Common myeloid progenitor, CD34-positive (primary cell): ENCODE measurements at regions of chr10 and their contacts with region 1.

Region 1: GRCh38 chr10:103678178-103678526 is 177.2 kb downstream of the SH3PXD2A start:
- DNase-seq: peak; percentile 93 to 98 (median 95)
- H3K4me3 ChIP-seq: peak overlapping the region in 4 of 7 experiments; percentile 22 to 65 (median 40)
- H3K27ac ChIP-seq: peak overlapping the region in 1 of 2 experiments; percentile 21
- H3K4me1 ChIP-seq: peaks cover 4 to 17% (median 10%) of the 10 kb centered on the region in 4 experiments
- H3K27me3 ChIP-seq: no peaks in the 10 kb centered on the region

Region 2: DNA sequence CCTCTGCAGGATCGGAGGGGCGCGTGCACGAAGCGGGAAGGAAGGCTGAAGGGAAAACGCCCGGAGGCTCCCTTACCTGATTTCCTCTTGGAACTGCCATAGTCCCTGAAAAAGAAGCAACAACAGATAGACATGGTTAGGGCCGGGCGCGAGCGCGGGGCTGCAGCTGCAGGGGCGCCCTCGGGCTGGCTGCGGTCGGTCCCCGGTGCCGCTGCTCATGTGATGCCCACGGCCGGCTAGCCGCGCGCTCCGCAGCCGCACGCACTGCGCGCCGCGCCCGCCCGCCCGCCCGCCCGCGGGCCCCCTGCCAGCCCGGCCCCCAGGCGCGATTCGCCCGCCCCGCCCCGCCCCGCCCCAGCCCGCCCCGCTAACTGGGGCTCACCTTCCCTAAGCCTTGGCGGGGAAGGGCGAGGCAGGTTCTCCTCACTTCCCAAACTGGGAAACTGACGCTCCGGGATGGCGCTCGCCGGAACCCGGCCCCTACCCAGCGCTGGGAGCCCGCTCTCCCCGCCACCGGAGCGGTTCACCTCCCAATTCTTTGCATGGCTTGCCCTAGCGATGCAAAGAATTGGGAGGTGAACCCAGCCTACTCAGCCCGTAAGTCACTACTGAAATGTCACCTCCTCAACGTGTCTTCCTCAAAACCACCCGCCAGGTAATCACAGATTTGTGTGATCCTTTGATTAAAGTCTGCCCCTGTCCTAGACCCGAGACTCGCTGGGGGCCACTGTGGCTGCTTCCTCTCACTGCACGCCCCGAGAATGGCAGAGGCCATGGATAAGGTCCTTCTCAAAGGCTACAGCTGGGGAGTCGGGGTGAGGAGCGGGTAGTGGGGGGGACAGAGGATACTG is 15.0 kb after region 1 on chr10:
- CTCF ChIA-PET with region 1: interaction called, 14 read pairs
- POLR2A ChIA-PET with region 1: no interaction called
- DNase-seq: peak; percentile 49 to 82 (median 79)
- H3K4me3 ChIP-seq: peak overlapping the region in 6 of 7 experiments; percentile 25 to 72 (median 50)
- H3K27ac ChIP-seq: no peak overlapping the region
- H3K4me1 ChIP-seq: peaks cover 0 to 35% (median 28%) of the 10 kb centered on the region in 4 experiments
- H3K27me3 ChIP-seq: peaks cover 0 to 33% (median 12%) of the 10 kb centered on the region in 5 experiments

Region 3: GRCh38 chr10:103870516-103870915 is 192.4 kb after region 1 on chr10:
- CTCF ChIA-PET with region 1: no interaction called
- POLR2A ChIA-PET with region 1: no interaction called
- DNase-seq: no peak
- H3K4me3 ChIP-seq: no peak overlapping the region
- H3K27ac ChIP-seq: no peak overlapping the region
- H3K4me1 ChIP-seq: no peaks in the 10 kb centered on the region
- H3K27me3 ChIP-seq: no peaks in the 10 kb centered on the region

Region 4: DNA sequence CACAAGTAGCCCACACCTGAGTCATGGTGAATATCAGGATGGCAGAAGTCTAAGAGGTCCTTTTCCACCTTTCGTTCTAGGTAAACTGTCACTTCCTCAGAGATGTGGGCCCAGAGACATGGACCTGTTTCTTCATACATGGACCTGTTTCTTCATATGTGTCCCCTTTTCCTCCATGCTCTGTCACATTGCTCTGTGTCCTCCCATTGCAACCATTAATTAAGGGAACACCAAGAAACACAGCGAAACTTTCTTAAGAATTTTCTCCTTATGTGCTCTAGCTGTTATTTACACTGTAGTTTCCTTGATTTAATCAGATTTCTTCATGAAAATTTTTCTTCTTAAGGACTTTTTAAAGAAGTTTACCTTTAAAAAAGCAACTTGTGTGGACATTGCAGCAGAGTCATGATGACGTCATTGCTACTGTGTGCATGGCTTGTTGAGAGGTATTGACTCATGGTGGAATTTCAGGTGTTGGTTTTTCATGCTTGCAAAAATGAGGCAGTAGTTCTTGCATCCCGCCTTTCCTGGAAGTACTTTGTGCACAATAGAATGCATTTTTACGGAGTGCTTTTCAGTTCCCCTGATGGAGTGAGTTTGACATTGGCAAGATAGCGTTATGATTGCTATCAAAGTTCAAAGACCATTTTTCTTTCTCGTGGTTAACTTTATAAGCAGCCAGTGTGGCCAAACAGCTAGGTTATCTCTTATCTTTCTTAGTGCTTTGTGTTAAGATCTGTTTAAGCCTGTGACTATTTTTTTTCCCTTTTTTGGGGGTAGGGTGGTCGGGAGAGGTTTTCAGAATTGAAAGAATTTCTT is 713.2 kb after region 1 on chr10:
- CTCF ChIA-PET with region 1: no interaction called
- POLR2A ChIA-PET with region 1: no interaction called
- DNase-seq: peak; percentile 16 to 48 (median 18)
- H3K4me3 ChIP-seq: no peak overlapping the region
- H3K27ac ChIP-seq: no peak overlapping the region
- H3K4me1 ChIP-seq: peaks cover 0 to 8% (median 2%) of the 10 kb centered on the region in 4 experiments
- H3K27me3 ChIP-seq: peaks cover 0 to 14% (median 6%) of the 10 kb centered on the region in 5 experiments